B cell (primary cell): ENCODE measurements at regions of chr1 and their contacts with region 1.

Region 1: DNA sequence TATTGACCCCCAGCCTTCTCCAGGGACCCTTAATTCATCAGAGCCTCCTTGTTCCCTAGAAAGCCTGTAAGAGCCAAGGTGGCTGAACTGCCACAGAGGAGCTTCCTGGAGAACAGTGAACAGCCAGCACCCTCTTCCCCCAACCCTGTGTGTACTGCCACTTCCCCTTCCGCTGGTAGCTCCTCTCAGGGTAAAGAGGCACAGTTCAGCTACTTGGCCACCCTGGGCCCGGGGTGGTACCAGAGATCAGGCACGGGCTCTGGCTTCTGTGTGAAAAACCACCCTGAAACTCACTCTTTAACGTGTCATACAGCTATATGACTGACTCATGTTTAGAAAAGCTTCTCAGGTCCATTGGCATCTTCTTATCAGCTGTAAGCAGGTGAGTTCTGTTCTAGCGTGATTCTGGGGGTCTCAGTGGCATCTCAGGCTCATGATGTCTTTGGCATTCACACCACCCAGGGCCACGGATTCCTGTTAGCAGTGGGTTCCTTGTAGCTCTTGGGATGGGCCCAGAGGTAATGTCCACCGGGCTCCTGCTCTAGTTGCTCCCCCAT is 22.4 kb downstream of the ARMH1 start:
- DNase-seq: peak; percentile 64
- ATAC-seq: peak; percentile 60
- H3K4me3 ChIP-seq: peak overlapping the region in 1 of 5 experiments; percentile 15
- H3K4me3 Mint-ChIP-seq: peak overlapping the region; percentile 62
- H3K27ac ChIP-seq: peak overlapping the region in 1 of 2 donors; percentile 67
- H3K27ac Mint-ChIP-seq: peak overlapping the region; percentile 89
- H3K4me1 ChIP-seq: peaks cover 44% of the 10 kb centered on the region in 2 donors
- H3K4me1 Mint-ChIP-seq: peaks cover 45% of the 10 kb centered on the region
- H3K27me3 ChIP-seq: no peaks in the 10 kb centered on the region
- H3K27me3 Mint-ChIP-seq: no peaks in the 10 kb centered on the region
- CTCF ChIP-seq: no peak

Region 2: GRCh38 chr1:44707959-44708831 is 11.3 kb after region 1 on chr1:
- CTCF ChIA-PET with region 1: interaction called, 23 read pairs
- POLR2A ChIA-PET with region 1: interaction called, 7 read pairs
- intact Hi-C with region 1: no loop called
- DNase-seq: peak; percentile 76
- ATAC-seq: peak; percentile 76
- H3K4me3 ChIP-seq: peak overlapping the region in 4 of 5 experiments; percentile 9 to 26 (median 14)
- H3K4me3 Mint-ChIP-seq: peak overlapping the region; percentile 59
- H3K27ac ChIP-seq: no peak overlapping the region
- H3K27ac Mint-ChIP-seq: peak overlapping the region; percentile 54
- H3K4me1 ChIP-seq: peaks cover 27 to 30% of the 10 kb centered on the region in 2 donors
- H3K4me1 Mint-ChIP-seq: peaks cover 25% of the 10 kb centered on the region
- H3K27me3 ChIP-seq: no peaks in the 10 kb centered on the region
- H3K27me3 Mint-ChIP-seq: no peaks in the 10 kb centered on the region
- CTCF ChIP-seq: peak; percentile 85

Region 3: GRCh38 chr1:44714944-44715571 is 18.2 kb after region 1 on chr1:
- CTCF ChIA-PET with region 1: interaction called, 12 read pairs
- POLR2A ChIA-PET with region 1: interaction called, 7 read pairs
- intact Hi-C with region 1: no loop called
- DNase-seq: peak; percentile 87
- ATAC-seq: peak; percentile 82
- H3K4me3 ChIP-seq: no peak overlapping the region
- H3K4me3 Mint-ChIP-seq: peak overlapping the region; percentile 64
- H3K27ac ChIP-seq: peak overlapping the region in 1 of 2 donors; percentile 56
- H3K27ac Mint-ChIP-seq: peak overlapping the region; percentile 86
- H3K4me1 ChIP-seq: peaks cover 50 to 53% of the 10 kb centered on the region in 2 donors
- H3K4me1 Mint-ChIP-seq: peaks cover 63% of the 10 kb centered on the region
- H3K27me3 ChIP-seq: no peaks in the 10 kb centered on the region
- H3K27me3 Mint-ChIP-seq: no peaks in the 10 kb centered on the region
- CTCF ChIP-seq: peak; percentile 92

Region 4: DNA sequence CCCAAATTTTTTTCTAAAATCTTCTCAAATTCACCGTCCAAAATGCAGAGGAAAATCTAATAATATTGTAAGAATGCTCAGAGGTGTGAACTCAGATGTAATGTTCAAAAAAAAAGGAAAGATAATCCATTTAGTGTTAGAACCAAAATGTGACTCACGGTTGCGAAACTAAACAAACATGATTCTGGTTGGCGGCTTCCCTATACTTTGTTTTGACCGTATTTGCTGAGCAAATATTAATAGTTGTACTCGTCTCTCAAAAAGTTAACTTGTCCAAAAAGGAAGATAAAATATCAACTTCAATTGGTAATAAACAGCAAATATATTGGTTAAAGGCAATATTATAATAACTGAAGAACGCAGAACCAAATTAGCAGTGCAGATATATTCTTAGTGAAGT is 475.2 kb after region 1 on chr1:
- CTCF ChIA-PET with region 1: no interaction called
- POLR2A ChIA-PET with region 1: no interaction called
- intact Hi-C with region 1: no loop called
- DNase-seq: no peak
- ATAC-seq: no peak
- H3K4me3 ChIP-seq: no peak overlapping the region
- H3K4me3 Mint-ChIP-seq: no peak overlapping the region
- H3K27ac ChIP-seq: no peak overlapping the region
- H3K27ac Mint-ChIP-seq: no peak overlapping the region
- H3K4me1 ChIP-seq: no peaks in the 10 kb centered on the region
- H3K4me1 Mint-ChIP-seq: no peaks in the 10 kb centered on the region
- H3K27me3 ChIP-seq: no peaks in the 10 kb centered on the region
- H3K27me3 Mint-ChIP-seq: peaks cover 5% of the 10 kb centered on the region
- CTCF ChIP-seq: no peak